A673 (cell line): ENCODE measurements at regions of chr21 and their contacts with region 1.

Region 1: DNA sequence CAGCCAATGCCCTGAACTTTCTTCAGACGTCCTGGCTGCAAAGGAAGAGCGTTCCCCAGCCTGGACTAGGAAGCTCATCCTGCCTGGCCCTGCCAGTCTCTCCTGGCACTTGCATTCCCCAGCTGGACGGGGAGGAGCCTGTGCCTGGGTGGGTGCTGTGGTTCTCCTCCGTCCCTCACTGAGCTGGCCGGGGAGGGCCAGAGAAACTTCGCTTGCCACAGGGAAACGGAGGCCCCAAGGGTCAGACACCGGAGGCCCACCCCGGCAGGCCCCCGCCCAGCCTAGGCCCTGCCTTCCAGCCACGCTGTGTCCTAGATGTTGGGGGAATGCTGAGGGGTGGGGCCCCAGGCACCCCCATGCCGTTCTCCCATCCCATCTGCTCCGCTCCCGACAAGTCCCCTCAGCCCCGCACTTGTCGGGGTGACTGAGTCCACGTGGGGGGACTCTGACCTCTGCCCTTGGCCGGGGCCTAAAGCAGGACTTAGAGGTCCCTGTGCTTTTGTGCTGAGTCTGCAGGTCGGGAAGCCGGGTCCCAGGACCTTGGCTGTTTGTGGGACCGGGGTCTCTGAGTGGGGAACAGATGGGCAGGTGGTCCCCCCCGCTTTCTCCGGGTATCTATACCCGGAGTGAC is 4.8 kb downstream of the FTCD start:
- DNase-seq: no peak
- H3K4me3 ChIP-seq: no peak overlapping the region
- H3K27ac ChIP-seq: no peak overlapping the region
- H3K4me1 ChIP-seq: peaks cover 5% of the 10 kb centered on the region
- H3K27me3 ChIP-seq: no peaks in the 10 kb centered on the region
- CTCF ChIP-seq: no peak

Region 2: DNA sequence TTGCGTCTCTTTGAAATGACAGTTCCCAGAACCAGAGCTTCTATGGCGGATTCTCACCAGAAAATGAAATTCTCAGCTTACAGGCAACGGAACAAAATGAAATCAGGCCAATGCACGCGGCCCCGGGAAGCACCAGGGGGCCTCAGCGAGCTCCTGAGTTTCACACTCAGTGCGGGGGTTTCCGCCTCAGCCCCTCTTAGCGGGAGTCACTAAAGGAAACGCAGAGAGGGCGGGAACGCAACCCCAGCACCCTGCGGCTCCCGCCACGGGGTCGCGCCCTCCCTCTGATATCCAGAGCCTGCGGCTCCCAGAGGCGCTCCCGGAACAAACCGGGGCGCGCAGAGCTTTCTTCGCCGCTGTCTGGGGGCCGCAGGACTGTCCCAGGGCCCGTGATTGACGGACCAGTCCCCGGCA is 176.9 kb before region 1 on chr21:
- CTCF ChIA-PET with region 1: no interaction called
- POLR2A ChIA-PET with region 1: no interaction called
- intact Hi-C with region 1: no loop called
- DNase-seq: peak; percentile 92
- H3K4me3 ChIP-seq: peak overlapping the region; percentile 45
- H3K27ac ChIP-seq: peak overlapping the region; percentile 73
- H3K4me1 ChIP-seq: peaks cover 67% of the 10 kb centered on the region
- H3K27me3 ChIP-seq: no peaks in the 10 kb centered on the region
- CTCF ChIP-seq: peak; percentile 81

Region 3: DNA sequence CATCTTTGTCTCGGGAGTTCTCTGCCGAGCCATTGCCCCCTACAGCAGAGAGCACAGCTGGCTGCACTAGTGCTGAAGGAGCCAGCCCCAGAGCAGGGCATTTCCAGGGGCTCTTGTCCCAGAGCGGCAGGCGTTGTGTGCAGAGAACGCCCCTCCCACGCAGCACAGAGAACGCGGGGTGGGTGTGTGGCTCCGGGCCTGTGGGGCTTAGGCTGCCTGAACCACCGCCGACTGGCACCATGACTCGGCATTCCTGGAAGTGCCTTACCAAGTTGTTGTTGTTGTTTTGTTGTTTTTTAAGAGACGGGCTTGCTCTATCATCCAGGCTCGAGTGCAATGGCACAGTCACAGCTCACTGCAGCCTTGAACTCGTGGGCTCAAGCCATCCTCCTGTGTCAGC is 292.3 kb after region 1 on chr21:
- CTCF ChIA-PET with region 1: interaction called, 12 read pairs
- POLR2A ChIA-PET with region 1: no interaction called
- intact Hi-C with region 1: no loop called
- DNase-seq: peak; percentile 17
- H3K4me3 ChIP-seq: no peak overlapping the region
- H3K27ac ChIP-seq: peak overlapping the region; percentile 38
- H3K4me1 ChIP-seq: no peaks in the 10 kb centered on the region
- H3K27me3 ChIP-seq: no peaks in the 10 kb centered on the region
- CTCF ChIP-seq: no peak